Psoas muscle (tissue), 8 donors: ENCODE measurements at regions of chr17 and their contacts with region 1.

Region 1: GRCh38 chr17:29760761-29761696 is 138.3 kb upstream of the CORO6 start:
- DNase-seq: peak; percentile 94 to 96
- ATAC-seq: peak; percentile 90 to 96 (median 94)
- H3K4me3 ChIP-seq: peak overlapping the region; percentile 95
- H3K27ac ChIP-seq: peak overlapping the region; percentile 97
- H3K4me1 ChIP-seq: peaks cover 22% of the 10 kb centered on the region
- H3K27me3 ChIP-seq: no peaks in the 10 kb centered on the region
- CTCF ChIP-seq: no peak

Region 2: GRCh38 chr17:29622337-29623282 is 138.4 kb before region 1 on chr17 and contains the start of gene CORO6:
- intact Hi-C with region 1: loop called in 1 of 2 experiments (anchors 5 kb)
- DNase-seq: peak; percentile 66 to 90
- ATAC-seq: peak; percentile 65 to 70 (median 68)
- H3K4me3 ChIP-seq: peak within 1 kb of the TSS; percentile 98
- H3K27ac ChIP-seq: peak within 1 kb of the TSS; percentile 99
- H3K4me1 ChIP-seq: peaks cover 58% of the 10 kb centered on the region
- H3K27me3 ChIP-seq: no peaks in the 10 kb centered on the region
- CTCF ChIP-seq: no peak
- total RNA-seq, gene CORO6: 478 to 710 (median 557) TPM

Region 3: DNA sequence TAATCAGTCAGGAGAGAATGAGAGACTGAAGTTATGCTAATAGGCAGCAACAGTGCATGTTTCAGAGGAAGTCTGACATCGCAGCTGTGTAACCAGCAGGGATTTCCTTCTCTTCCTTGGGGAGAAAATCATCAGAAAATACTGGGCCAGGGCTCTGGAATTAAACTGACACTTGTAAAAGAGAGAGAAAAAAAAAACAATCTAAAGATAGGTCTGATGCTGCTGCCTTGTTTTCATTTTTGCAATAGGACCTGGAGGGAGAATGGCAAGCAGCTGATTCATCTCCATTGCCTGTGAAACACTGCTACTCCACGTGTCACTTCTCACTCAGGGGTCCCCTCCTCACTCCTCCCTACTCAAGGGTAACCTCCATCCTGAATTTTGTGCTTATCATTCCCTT is 120.6 kb before region 1 on chr17:
- intact Hi-C with region 1: loop called (anchors 5 kb)
- DNase-seq: no peak
- ATAC-seq: peak; percentile 51 to 64 (median 57)
- H3K4me3 ChIP-seq: peak overlapping the region; percentile 56
- H3K27ac ChIP-seq: peak overlapping the region; percentile 94
- H3K4me1 ChIP-seq: peaks cover 78% of the 10 kb centered on the region
- H3K27me3 ChIP-seq: no peaks in the 10 kb centered on the region
- CTCF ChIP-seq: no peak

Region 4: DNA sequence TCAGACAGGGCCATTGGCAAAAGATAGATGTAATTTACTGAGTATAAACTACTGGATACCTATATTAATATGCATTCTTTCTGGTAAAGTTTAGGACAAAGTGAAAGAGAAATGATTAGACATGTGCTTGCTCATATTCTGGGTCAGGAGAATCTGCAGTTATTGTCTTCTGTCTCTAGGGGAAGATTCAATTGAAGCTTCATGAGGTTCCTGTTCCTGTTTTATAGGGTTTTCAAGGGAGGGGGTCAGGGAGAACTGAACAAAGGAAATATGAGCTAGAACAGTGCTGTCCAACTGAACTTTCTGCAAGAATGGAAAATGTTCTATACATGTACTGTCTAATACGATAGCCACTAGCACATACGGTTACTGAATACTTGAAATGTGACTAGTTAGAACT is 79.0 kb before region 1 on chr17:
- intact Hi-C with region 1: loop called in 1 of 2 experiments (anchors 5 kb)
- DNase-seq: no peak
- ATAC-seq: no peak
- H3K4me3 ChIP-seq: no peak overlapping the region
- H3K27ac ChIP-seq: peak overlapping the region; percentile 88
- H3K4me1 ChIP-seq: peaks cover 63% of the 10 kb centered on the region
- H3K27me3 ChIP-seq: no peaks in the 10 kb centered on the region
- CTCF ChIP-seq: no peak

Region 5: DNA sequence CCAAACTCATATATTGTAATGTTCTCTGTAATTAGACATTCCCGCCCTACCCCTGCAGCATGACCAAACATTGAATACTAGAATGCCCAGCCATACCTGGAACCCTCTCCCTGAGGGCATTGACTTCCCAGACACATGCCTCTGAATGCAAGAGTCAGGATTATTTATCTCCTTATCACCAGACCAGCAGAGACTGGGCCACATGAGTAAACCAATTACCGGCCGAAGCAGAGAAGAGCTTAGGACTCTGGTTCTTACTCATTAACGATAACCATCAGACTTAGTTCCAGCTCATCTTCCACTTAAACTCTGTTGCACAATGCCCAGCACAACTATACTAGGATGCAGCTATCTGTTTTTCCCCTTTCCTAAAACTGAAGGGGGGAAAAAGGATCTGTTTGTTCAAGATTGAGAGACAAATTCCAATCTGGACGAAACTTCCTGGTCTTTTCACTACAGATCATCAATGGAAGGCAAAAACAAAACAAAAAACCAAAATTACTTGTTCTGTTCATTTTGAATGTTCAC is 50.1 kb before region 1 on chr17:
- intact Hi-C with region 1: loop called in 1 of 2 experiments (anchors 5 kb)
- DNase-seq: no peak
- ATAC-seq: peak; percentile 30 to 70 (median 62)
- H3K4me3 ChIP-seq: peak overlapping the region; percentile 57
- H3K27ac ChIP-seq: peak overlapping the region; percentile 80
- H3K4me1 ChIP-seq: peaks cover 68% of the 10 kb centered on the region
- H3K27me3 ChIP-seq: no peaks in the 10 kb centered on the region
- CTCF ChIP-seq: no peak

Region 6: GRCh38 chr17:29844339-29845048 is 83.5 kb after region 1 on chr17:
- intact Hi-C with region 1: no loop called
- DNase-seq: no peak
- ATAC-seq: no peak
- H3K4me3 ChIP-seq: no peak overlapping the region
- H3K27ac ChIP-seq: no peak overlapping the region
- H3K4me1 ChIP-seq: peaks cover 18% of the 10 kb centered on the region
- H3K27me3 ChIP-seq: no peaks in the 10 kb centered on the region
- CTCF ChIP-seq: no peak